Aorta (tissue), 5 donors: ENCODE measurements at regions of chr6 and their contacts with region 1.

Region 1: GRCh38 chr6:31665501-31666336 is at the start of gene CSNK2B:
- DNase-seq: peak; percentile 99
- ATAC-seq: peak; percentile 95
- H3K4me3 ChIP-seq: peak within 1 kb of the TSS; percentile 55 to 77
- H3K27ac ChIP-seq: peak within 1 kb of the TSS; percentile 49 to 86
- H3K4me1 ChIP-seq: no peaks in the 10 kb centered on the region
- H3K27me3 ChIP-seq: no peaks in the 10 kb centered on the region
- total RNA-seq, gene CSNK2B: 100 to 106 TPM

Region 2: GRCh38 chr6:31619805-31620585 is 45.7 kb before region 1 on chr6:
- intact Hi-C with region 1: loop called in 1 of 2 experiments (anchors 5 kb)
- DNase-seq: peak; percentile 98 to 99
- ATAC-seq: peak; percentile 97
- H3K4me3 ChIP-seq: peak overlapping the region; percentile 11 to 22
- H3K27ac ChIP-seq: peak overlapping the region; percentile 59 to 89
- H3K4me1 ChIP-seq: no peaks in the 10 kb centered on the region
- H3K27me3 ChIP-seq: no peaks in the 10 kb centered on the region

Region 3: GRCh38 chr6:31652925-31653718 is 12.6 kb before region 1 on chr6:
- intact Hi-C with region 1: loop called in 1 of 2 experiments (anchors 1 kb)
- DNase-seq: peak; percentile 92 to 93
- ATAC-seq: peak; percentile 90
- H3K4me3 ChIP-seq: peak overlapping the region; percentile 32 to 64
- H3K27ac ChIP-seq: peak overlapping the region; percentile 52 to 87
- H3K4me1 ChIP-seq: no peaks in the 10 kb centered on the region
- H3K27me3 ChIP-seq: no peaks in the 10 kb centered on the region

Region 4: DNA sequence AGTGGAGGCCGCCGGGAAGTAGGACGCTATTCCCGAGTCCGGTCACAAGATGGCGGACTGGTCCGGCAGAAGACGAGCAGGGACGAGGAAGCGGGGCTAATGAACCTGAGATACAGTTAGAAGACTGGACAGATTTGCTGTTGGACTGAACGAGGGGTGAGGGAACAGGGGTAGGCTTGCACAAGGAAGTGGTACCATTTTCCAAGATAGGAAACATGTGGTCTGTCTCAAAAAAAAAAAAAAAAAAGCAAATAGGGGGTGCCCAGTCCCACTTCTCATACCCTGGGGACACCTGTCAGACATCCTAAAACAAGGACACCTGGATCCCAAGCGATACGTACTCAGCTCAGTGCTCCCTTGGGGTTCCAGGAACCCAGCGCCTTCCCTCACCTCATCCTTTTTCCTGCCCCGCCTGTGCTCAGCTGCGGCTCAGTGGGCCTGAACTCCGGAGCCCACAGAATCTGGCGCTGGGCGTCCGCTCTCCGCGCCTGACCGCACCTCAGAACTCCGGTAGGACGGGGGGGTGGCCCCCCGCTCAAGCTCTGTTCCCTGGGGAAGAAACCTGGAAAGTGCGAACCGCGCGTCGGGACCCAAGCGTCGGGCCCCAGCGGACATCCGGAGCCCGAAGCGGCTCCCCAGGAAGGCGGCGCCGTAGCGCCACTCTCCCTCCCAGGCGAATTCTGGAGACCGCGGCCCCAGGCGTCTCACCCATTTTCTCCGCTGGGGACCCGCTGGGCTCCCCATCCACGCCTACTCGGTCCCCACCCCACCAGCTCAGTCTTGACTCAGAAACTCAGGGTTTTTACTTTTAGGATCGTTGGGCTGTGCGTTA is 15.3 kb after region 1 on chr6 and contains the start of gene LY6G5C:
- intact Hi-C with region 1: no loop called
- DNase-seq: peak; percentile 90 to 93
- ATAC-seq: peak; percentile 94
- H3K4me3 ChIP-seq: peak within 1 kb of the TSS in 1 of 2 donors; percentile 56
- H3K27ac ChIP-seq: no peak within 1 kb of the TSS
- H3K4me1 ChIP-seq: no peaks in the 10 kb centered on the region
- H3K27me3 ChIP-seq: no peaks in the 10 kb centered on the region
- total RNA-seq, gene LY6G5C: 1.2 to 3.3 TPM

Region 5: DNA sequence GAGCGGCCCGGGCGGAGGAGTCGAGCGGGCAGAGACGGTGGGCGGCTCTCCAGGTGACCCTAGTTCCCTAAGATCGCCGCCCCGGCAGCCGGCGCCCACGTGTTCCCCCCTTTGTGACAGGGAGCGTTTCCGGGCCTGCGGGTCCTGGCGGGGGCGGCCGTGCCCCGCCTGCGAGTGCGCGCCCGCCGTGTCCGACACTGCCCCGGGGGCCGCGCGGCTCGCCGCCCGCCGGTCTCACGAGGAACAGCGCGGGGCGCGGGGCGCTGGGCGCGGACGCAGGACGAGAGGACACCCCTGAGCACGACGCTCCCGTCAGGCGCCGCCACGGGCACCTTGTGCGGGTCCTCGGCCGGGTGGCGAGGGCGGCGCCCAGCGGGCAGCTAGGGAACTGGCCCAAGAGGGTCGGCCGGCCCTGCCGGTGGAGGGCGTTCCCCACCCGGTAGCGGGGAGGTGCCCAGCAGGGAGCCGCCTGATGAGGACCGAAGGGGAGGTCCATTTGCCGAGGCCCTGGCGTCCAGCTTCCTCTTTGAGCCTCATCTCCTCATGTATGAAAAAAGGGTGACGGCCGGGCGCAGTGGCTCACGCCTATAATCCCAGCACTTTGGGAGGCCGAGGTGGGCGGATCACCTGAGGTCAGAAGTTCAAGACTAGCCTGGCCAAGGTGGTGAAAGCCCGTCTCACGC is 130.0 kb after region 1 on chr6 and contains the start of gene VARS1:
- intact Hi-C with region 1: loop called in 1 of 2 experiments (anchors 5 kb)
- DNase-seq: peak; percentile 96 to 97
- ATAC-seq: peak; percentile 94
- H3K4me3 ChIP-seq: peak within 1 kb of the TSS; percentile 43 to 78
- H3K27ac ChIP-seq: peak within 1 kb of the TSS; percentile 33 to 62
- H3K4me1 ChIP-seq: no peaks in the 10 kb centered on the region
- H3K27me3 ChIP-seq: no peaks in the 10 kb centered on the region
- total RNA-seq, gene VARS1: 44.4 to 49.6 TPM